HCT116 (cell line): ENCODE measurements at regions of chr3 and their contacts with region 1.

Region 1: DNA sequence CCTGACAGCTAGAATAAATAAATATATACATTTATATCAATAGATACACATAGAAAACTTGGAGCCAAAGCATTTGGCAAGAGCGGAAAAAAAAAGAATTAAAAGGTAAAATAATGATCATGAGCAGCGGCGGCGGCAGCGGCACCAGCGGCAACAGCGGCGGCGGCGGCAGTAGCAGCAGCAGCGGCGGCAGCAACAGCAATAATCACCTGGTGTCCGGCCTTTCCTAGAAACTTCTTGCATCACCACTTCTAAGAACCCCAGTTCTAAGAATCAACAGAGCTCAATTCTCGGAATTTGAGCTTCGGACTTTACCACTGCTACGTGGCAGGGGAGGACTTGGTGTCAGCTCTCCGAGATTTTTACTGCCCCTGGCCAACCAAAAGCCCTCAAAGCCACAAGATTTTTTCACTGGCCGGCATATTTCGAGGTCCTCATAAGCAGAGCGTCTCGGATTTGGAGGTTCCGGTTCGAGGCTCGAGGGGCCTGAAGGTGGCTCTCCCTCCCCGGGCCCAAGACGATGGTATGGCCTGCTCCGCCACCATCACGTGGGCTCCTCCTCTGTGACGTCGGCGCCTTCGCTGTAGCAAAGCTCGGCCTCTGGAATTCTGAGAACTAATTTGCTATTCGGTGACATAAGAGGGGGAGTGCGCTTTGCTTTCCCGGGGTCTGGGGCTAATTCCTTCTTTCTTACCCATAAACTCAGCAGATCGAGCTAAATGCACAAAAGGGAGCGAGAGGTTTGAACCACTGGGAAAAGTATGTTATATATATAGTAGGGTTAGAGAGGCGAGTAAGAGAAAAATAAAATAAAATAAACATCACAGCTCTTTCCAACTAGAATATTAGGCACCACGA is at the start of gene BCL6:
- DNase-seq: peak; percentile 98
- ATAC-seq: peak; percentile 67
- H3K4me3 ChIP-seq: peak within 1 kb of the TSS; percentile 89 to 91
- H3K27ac ChIP-seq: peak within 1 kb of the TSS; percentile 78
- H3K4me1 ChIP-seq: peaks cover 29 to 65% of the 10 kb centered on the region in 2 experiments; a peak in 3 of 4 replicates
- H3K27me3 ChIP-seq: no peaks in the 10 kb centered on the region
- CTCF ChIP-seq: no peak
- POLR2A ChIP-seq: peak; percentile 86
- RAD21 ChIP-seq: no peak
- total RNA-seq, gene BCL6: 17.5 TPM

Region 2: DNA sequence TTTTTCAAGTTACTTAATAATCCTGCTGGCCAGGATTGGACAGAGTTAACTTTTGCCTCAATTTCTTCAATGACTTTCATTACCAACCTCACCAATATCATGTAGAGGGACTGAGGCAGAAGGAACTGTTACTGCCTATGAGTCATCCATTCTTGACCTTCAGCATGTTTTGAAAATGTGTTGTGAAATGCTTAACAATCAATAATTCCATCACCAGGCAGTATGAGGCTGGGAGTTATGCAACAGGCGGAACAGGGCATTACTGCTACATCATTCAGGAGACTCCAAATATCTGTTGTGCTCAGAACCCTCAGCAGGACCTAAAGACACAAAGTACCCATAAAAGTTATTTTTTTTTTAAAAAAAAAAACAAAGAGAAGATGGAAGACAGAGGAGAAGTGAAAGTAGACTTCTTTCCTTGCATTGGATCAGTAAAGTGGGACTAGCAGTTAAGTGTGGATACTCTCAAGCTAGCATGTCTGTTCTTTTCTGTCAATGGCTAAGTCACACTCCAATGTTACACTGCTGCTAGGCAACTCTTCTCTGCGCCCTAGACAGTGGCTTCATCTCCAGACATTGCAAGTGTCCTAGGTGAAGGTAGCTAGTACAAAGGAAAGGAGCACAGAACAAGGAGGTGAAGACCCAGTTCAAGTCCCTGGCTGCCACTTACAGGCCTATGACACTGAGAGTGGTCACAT is 223.6 kb after region 1 on chr3:
- CTCF ChIA-PET with region 1: no interaction called
- POLR2A ChIA-PET with region 1: interaction called, 3 read pairs
- RAD21 ChIA-PET with region 1: no interaction called
- intact Hi-C with region 1: loop called (anchors 10 kb)
- DNase-seq: no peak
- ATAC-seq: peak; percentile 33; the same call in 1 of the 2 replicates
- H3K4me3 ChIP-seq: no peak overlapping the region
- H3K27ac ChIP-seq: no peak overlapping the region
- H3K4me1 ChIP-seq: peaks cover 0 to 11% of the 10 kb centered on the region in 2 experiments; a peak in 2 of 4 replicates
- H3K27me3 ChIP-seq: no peaks in the 10 kb centered on the region
- CTCF ChIP-seq: no peak
- POLR2A ChIP-seq: no peak
- RAD21 ChIP-seq: peak; percentile 14; the same call in 1 of the 2 replicates

Region 3: GRCh38 chr3:188154014-188154808 is 408.8 kb after region 1 on chr3 and contains the start of gene LPP:
- CTCF ChIA-PET with region 1: no interaction called
- POLR2A ChIA-PET with region 1: interaction called, 3 read pairs
- RAD21 ChIA-PET with region 1: no interaction called
- intact Hi-C with region 1: loop called (anchors 5 kb)
- DNase-seq: no peak
- ATAC-seq: peak; percentile 88
- H3K4me3 ChIP-seq: peak within 1 kb of the TSS; percentile 68 to 73
- H3K27ac ChIP-seq: peak within 1 kb of the TSS; percentile 79
- H3K4me1 ChIP-seq: peaks cover 13 to 55% of the 10 kb centered on the region in 2 experiments
- H3K27me3 ChIP-seq: no peaks in the 10 kb centered on the region
- CTCF ChIP-seq: no peak
- POLR2A ChIP-seq: peak; percentile 10
- RAD21 ChIP-seq: 0 out of 2 replicates have a peak, but pooled peaks have one; percentile 6
- total RNA-seq, gene LPP: 54.0 TPM

Region 4: DNA sequence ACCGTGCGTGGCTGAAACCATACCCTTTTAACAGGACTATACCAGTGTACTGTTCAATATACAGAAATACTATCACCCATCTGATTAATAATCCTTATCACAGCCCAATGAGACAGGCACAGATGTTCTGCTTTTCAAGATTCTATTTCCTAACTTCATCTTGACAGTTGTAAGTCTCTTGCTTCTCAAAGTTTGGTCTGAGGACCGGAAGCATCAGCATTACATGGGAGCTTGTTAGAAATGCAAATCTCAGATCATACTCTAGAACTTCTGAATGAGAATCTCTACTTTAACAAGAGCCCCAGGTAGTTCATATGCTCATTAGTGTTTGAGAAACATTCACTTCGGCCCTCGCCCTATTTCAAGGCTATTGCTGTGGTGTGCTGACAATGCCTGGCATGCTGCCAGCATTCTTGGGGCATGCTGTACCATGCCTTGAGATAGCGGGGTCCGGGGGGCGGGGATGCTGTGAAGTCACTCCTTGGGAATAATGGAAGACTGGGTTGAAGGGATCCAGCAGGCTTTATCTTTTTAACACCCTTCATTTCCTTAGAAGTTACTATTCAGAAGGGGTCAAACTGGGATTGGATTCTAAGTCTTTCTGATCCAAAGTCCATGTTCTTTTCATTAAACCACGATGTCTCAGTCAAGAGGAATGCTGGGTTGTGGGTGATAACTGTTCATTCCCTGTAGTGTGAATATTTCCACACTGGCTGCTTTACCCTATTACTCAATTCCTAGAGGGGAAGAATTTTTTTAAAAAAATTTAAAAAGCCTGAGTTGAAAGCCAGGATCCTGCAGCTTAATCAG is 603.2 kb after region 1 on chr3:
- CTCF ChIA-PET with region 1: no interaction called
- POLR2A ChIA-PET with region 1: no interaction called
- RAD21 ChIA-PET with region 1: no interaction called
- intact Hi-C with region 1: loop called (anchors 10 kb)
- DNase-seq: peak; percentile 63
- ATAC-seq: peak; percentile 86
- H3K4me3 ChIP-seq: peak overlapping the region in 1 of 2 experiments; percentile 16; a peak in 2 of 4 replicates
- H3K27ac ChIP-seq: peak overlapping the region; percentile 44
- H3K4me1 ChIP-seq: peaks cover 21 to 28% of the 10 kb centered on the region in 2 experiments
- H3K27me3 ChIP-seq: no peaks in the 10 kb centered on the region
- CTCF ChIP-seq: no peak
- POLR2A ChIP-seq: no peak
- RAD21 ChIP-seq: peak; percentile 9; the same call in 1 of the 2 replicates

Region 5: GRCh38 chr3:188830893-188831292 is 1085.5 kb after region 1 on chr3:
- CTCF ChIA-PET with region 1: no interaction called
- POLR2A ChIA-PET with region 1: no interaction called
- RAD21 ChIA-PET with region 1: no interaction called
- intact Hi-C with region 1: loop called (anchors 5 kb)
- DNase-seq: no peak
- ATAC-seq: peak; percentile 64
- H3K4me3 ChIP-seq: no peak overlapping the region
- H3K27ac ChIP-seq: no peak overlapping the region
- H3K4me1 ChIP-seq: 0 out of 4 replicates have a peak, but pooled peaks cover 0 to 4% of the 10 kb centered on the region in 2 experiments
- H3K27me3 ChIP-seq: no peaks in the 10 kb centered on the region
- CTCF ChIP-seq: peak; percentile 40 to 55 (median 44); a peak in 5 of 6 replicates
- POLR2A ChIP-seq: no peak
- RAD21 ChIP-seq: peak; percentile 56